ENCODE measurements at regions of chr16 and their contacts with region 1.

Region 1: GRCh38 chr16:71808593-71809459 is at the start of gene AP1G1:
- DNase-seq: peak; percentile 95
- ATAC-seq: peak; percentile 94
- H3K4me3 Mint-ChIP-seq: peak within 1 kb of the TSS; percentile 99
- H3K27ac Mint-ChIP-seq: peak within 1 kb of the TSS; percentile 100
- H3K4me1 Mint-ChIP-seq: peaks cover 18% of the 10 kb centered on the region
- H3K27me3 Mint-ChIP-seq: no peaks in the 10 kb centered on the region
- CTCF ChIP-seq: no peak
- total RNA-seq, gene AP1G1: 53.9 to 57.4 TPM

Region 2: DNA sequence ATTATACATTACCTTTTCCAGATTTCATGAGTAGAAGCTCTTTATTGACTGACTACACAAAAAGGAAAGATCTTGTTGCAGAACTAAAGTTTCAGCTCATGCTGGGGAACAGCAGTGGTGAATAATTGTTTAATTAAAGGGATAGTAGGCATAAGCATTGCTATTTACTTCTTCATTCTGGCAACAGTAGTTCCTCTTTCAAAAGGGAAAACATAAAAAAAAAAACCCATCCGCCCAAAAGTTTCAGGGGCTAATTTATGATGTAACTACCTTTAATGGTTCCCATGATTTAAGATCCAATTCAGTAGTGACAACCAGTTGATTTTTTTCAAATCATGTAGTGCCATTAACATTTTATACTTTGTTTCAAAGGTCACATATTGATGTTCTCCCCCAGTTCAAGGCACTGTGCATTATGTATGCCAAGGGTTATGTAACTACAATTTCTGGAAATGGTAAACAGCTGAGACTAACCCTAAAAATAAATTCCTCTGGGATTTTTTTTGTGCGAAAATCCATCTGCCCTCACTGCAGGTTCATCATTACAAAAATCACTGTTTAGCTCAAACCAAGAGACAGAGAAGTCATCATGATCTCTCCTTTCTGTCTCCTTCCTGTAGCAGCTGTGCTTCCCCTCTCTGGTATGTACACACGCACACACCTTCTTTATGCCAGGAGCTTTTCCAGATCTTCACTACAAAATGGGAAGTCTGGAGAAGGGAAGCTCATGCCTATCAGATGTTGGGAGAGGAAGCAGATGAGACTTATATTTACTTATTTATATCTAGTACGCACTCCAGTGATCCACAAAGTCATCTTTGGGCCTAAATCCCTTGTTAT is 82.1 kb before region 1 on chr16:
- CTCF ChIA-PET with region 1: no interaction called
- POLR2A ChIA-PET with region 1: no interaction called
- intact Hi-C with region 1: no loop called
- DNase-seq: no peak
- ATAC-seq: no peak
- H3K4me3 Mint-ChIP-seq: no peak overlapping the region
- H3K27ac Mint-ChIP-seq: no peak overlapping the region
- H3K4me1 Mint-ChIP-seq: peaks cover 21% of the 10 kb centered on the region
- H3K27me3 Mint-ChIP-seq: peaks cover 2% of the 10 kb centered on the region
- CTCF ChIP-seq: no peak

Region 3: DNA sequence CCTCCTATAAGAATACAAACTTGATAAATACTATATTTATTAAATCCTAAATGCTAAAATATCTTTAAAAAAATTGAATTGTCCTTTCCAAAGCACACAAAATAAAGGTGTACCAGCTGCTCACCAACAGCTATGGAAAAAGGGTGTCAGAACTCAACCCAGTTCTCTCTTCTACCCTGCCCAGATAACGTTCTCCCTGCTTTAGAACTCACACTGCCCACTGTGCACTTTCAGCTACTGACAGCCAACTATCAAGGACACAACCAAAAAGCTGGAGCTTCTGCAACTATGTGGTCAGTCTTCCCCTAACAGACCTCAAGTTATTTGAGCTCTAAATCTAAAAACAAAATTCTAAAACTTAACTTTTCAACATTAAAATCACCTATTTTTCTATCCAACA is 13.9 kb before region 1 on chr16:
- CTCF ChIA-PET with region 1: no interaction called
- POLR2A ChIA-PET with region 1: interaction called, 19 read pairs
- intact Hi-C with region 1: no loop called
- DNase-seq: no peak
- ATAC-seq: peak; percentile 60
- H3K4me3 Mint-ChIP-seq: no peak overlapping the region
- H3K27ac Mint-ChIP-seq: peak overlapping the region; percentile 23
- H3K4me1 Mint-ChIP-seq: peaks cover 48% of the 10 kb centered on the region
- H3K27me3 Mint-ChIP-seq: no peaks in the 10 kb centered on the region
- CTCF ChIP-seq: no peak

Region 4: DNA sequence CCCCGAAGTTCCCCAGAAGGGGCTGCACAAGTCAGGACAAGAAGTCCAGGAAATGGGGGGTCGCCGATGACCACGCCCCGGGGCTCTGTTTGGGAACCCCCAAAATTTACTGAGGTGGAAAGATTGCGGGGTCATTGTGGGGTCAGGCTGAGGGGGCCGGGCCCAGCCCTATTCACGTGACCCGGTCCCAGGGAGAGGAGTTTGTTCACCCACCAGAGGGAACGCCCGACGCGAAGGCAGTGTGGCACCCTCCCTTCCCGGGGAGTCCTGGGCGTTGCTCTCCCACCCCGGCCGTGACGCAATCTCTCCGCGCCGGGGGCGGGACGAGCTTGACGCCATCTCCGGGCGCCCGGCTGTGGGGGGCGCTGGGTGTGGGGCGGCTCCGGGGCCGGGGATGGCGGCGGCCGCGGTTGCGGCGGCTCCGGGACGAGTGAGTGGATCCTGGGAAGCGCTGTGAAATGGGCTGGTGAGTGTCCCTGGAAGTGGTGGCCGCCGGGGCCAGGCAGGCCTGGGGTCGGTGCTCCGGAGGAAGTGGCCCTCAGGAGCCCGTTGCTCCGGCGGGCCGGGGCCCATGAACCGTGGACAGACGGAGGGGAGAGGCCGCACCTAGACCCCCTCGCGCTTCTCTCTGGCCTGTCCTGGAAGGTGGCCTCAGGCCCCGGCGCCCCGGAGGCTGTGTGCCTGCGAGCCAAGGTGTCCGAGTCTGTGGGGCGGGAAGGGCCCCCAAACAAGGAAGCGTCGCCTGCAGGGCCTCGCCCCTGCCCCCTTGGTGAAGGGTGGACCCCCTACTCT is 37.0 kb after region 1 on chr16 and contains the start of gene ATXN1L:
- CTCF ChIA-PET with region 1: interaction called, 5 read pairs
- POLR2A ChIA-PET with region 1: interaction called, 18 read pairs
- intact Hi-C with region 1: no loop called
- DNase-seq: peak; percentile 92
- ATAC-seq: peak; percentile 92
- H3K4me3 Mint-ChIP-seq: peak within 1 kb of the TSS; percentile 89
- H3K27ac Mint-ChIP-seq: peak within 1 kb of the TSS; percentile 93
- H3K4me1 Mint-ChIP-seq: peaks cover 36% of the 10 kb centered on the region
- H3K27me3 Mint-ChIP-seq: no peaks in the 10 kb centered on the region
- CTCF ChIP-seq: no peak
- total RNA-seq, gene ATXN1L: 13.6 to 14.9 TPM

Region 5: GRCh38 chr16:71894921-71895678 is 86.3 kb after region 1 on chr16 and contains the start of gene IST1:
- CTCF ChIA-PET with region 1: no interaction called
- POLR2A ChIA-PET with region 1: interaction called, 19 read pairs
- intact Hi-C with region 1: loop called (anchors 5 kb)
- DNase-seq: peak; percentile 99
- ATAC-seq: peak; percentile 94
- H3K4me3 Mint-ChIP-seq: peak within 1 kb of the TSS; percentile 99
- H3K27ac Mint-ChIP-seq: peak within 1 kb of the TSS; percentile 98
- H3K4me1 Mint-ChIP-seq: peaks cover 17% of the 10 kb centered on the region
- H3K27me3 Mint-ChIP-seq: no peaks in the 10 kb centered on the region
- CTCF ChIP-seq: no peak
- total RNA-seq, gene IST1: 157 to 175 TPM